GM12878 (cell line): ENCODE measurements at regions of chr3 and their contacts with region 1.

Region 1: DNA sequence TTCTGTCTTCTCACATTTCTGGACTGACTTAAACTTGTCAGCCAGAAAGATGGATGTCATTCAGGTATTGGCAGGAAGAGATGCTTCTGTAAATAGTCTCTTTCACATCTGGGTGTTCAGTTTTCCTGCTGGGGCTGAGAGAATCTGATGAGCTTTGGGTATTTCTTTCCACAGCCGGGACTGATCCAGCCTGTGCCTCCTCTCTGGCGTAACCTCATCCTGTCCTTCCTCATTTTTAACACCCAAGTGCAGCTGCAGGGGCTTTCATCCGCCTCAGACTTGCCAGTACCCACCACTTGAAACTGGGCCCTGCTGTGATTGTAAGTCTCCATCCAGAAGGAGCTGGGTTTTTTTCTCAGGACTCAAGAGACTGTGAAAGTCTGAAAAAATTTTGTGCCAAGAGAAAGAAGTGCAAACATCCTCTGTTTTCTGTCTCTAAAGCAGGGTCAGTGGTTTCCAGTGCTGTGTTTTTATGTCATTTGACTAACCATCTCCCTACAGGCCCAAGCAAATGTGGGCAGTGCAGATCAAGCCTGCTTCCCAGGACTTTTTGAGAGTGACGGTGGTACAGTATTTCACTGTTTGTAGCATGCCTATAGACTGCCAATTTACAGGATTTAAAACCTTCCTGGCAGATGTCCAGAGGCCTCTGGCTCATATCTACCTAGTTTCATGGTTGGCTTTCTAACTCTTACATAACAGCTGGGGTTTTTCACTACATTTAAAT is 342.7 kb downstream of the PTPRG start:
- DNase-seq: no peak
- ATAC-seq: peak; percentile 71
- H3K4me3 ChIP-seq: no peak overlapping the region
- H3K27ac ChIP-seq: no peak overlapping the region
- H3K4me1 ChIP-seq: no peaks in the 10 kb centered on the region
- H3K27me3 ChIP-seq: no peaks in the 10 kb centered on the region; a peak in 1 of 4 replicates
- CTCF ChIP-seq: no peak
- EP300 ChIP-seq: no peak
- POLR2A ChIP-seq: no peak
- RAD21 ChIP-seq: no peak

Region 2: GRCh38 chr3:61872077-61872706 is 31.9 kb before region 1 on chr3:
- CTCF ChIA-PET with region 1: no interaction called
- POLR2A ChIA-PET with region 1: no interaction called
- RAD21 ChIA-PET with region 1: interaction called, 5 read pairs
- SMC1A ChIA-PET with region 1: interaction called, 13 read pairs
- in situ Hi-C with region 1: no loop called
- intact Hi-C with region 1: no loop called
- DNase-seq: no peak
- ATAC-seq: no peak
- H3K4me3 ChIP-seq: no peak overlapping the region
- H3K27ac ChIP-seq: no peak overlapping the region
- H3K4me1 ChIP-seq: no peaks in the 10 kb centered on the region
- H3K27me3 ChIP-seq: no peaks in the 10 kb centered on the region
- CTCF ChIP-seq: no peak
- EP300 ChIP-seq: no peak
- POLR2A ChIP-seq: no peak
- RAD21 ChIP-seq: no peak

Region 3: GRCh38 chr3:61890167-61890566 is 13.9 kb before region 1 on chr3:
- CTCF ChIA-PET with region 1: interaction called, 15 read pairs
- POLR2A ChIA-PET with region 1: interaction called, 6 read pairs
- RAD21 ChIA-PET with region 1: interaction called, 17 read pairs
- SMC1A ChIA-PET with region 1: interaction called, 30 read pairs
- in situ Hi-C with region 1: no loop called
- intact Hi-C with region 1: no loop called
- DNase-seq: no peak
- ATAC-seq: peak; percentile 30
- H3K4me3 ChIP-seq: no peak overlapping the region
- H3K27ac ChIP-seq: no peak overlapping the region
- H3K4me1 ChIP-seq: peaks cover 5% of the 10 kb centered on the region; the same call in 1 of the 2 replicates
- H3K27me3 ChIP-seq: no peaks in the 10 kb centered on the region
- CTCF ChIP-seq: no peak
- EP300 ChIP-seq: no peak
- POLR2A ChIP-seq: no peak
- RAD21 ChIP-seq: no peak

Region 4: DNA sequence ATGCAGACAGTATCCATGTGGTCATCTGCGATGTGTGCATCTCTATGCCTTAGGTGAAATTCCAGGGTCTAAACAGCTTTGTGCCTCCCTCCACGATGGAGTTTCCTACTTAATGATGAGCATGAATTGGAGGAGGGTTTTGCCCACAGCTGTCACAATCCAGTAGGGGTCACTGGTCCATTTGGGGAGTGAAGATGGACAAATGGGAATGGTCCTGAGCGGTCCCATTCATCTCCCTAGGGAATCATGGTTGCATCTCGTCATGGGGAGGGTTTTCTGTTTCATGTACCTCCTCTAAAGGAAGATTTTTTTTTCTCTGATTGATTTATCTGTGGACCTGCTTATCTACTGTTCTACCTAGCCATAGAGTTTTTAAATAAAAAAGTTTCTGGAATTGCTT is 15.3 kb after region 1 on chr3:
- CTCF ChIA-PET with region 1: interaction called, 8 read pairs
- POLR2A ChIA-PET with region 1: interaction called, 4 read pairs
- RAD21 ChIA-PET with region 1: interaction called, 10 read pairs
- SMC1A ChIA-PET with region 1: interaction called, 12 read pairs
- in situ Hi-C with region 1: no loop called
- intact Hi-C with region 1: no loop called
- DNase-seq: no peak
- ATAC-seq: no peak
- H3K4me3 ChIP-seq: no peak overlapping the region
- H3K27ac ChIP-seq: no peak overlapping the region
- H3K4me1 ChIP-seq: no peaks in the 10 kb centered on the region
- H3K27me3 ChIP-seq: peaks cover 0 to 2% of the 10 kb centered on the region in 2 experiments; a peak in 1 of 4 replicates
- CTCF ChIP-seq: no peak
- EP300 ChIP-seq: no peak
- POLR2A ChIP-seq: no peak
- RAD21 ChIP-seq: no peak